AG04449 (cell line): ENCODE measurements at regions of chr6 and their contacts with region 1.

Region 1: DNA sequence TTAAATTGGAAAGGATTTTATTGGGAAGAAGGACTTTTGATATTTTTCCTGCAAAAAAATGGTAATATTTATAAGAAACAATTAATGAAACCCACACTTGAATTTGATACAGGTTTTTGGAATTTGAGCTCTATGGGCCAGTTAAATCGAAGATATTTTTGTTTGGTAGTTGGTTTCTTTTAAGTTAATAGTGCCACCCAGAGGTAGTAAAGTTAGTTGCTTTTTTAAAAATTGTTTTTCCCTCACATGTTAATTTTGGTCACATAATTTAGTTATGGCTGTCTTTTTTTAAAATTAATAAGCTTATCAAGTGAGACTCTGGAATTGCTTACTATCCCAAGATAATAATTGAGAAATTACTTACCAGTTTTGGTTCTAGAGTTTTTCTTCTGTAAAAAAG is 7.1 kb downstream of the PRIM2 start:
- DNase-seq: no peak
- H3K4me3 ChIP-seq: no peak overlapping the region
- CTCF ChIP-seq: no peak

Region 2: GRCh38 chr6:57190140-57190539 is 134.4 kb before region 1 on chr6:
- CTCF ChIA-PET with region 1: interaction called, 207 read pairs
- POLR2A ChIA-PET with region 1: no interaction called
- DNase-seq: no peak
- H3K4me3 ChIP-seq: no peak overlapping the region
- CTCF ChIP-seq: no peak

Region 3: GRCh38 chr6:57294862-57295445 is 29.6 kb before region 1 on chr6:
- CTCF ChIA-PET with region 1: no interaction called
- POLR2A ChIA-PET with region 1: no interaction called
- DNase-seq: no peak
- H3K4me3 ChIP-seq: no peak overlapping the region
- CTCF ChIP-seq: no peak

Region 4: GRCh38 chr6:57305761-57306160 is 18.8 kb before region 1 on chr6:
- CTCF ChIA-PET with region 1: no interaction called
- POLR2A ChIA-PET with region 1: no interaction called
- DNase-seq: no peak
- H3K4me3 ChIP-seq: no peak overlapping the region
- CTCF ChIP-seq: no peak